ENCODE measurements at regions of chr1 and their contacts with region 1.

Region 1: GRCh38 chr1:23177438-23178380 is 9.1 kb upstream of the LUZP1 start:
- ATAC-seq: peak; percentile 93 to 98 (median 96)
- H3K4me3 ChIP-seq: peak overlapping the region; percentile 28 to 40 (median 36)
- H3K27ac ChIP-seq: peak overlapping the region; percentile 74 to 75
- H3K4me1 ChIP-seq: no peaks in the 10 kb centered on the region

Region 2: DNA sequence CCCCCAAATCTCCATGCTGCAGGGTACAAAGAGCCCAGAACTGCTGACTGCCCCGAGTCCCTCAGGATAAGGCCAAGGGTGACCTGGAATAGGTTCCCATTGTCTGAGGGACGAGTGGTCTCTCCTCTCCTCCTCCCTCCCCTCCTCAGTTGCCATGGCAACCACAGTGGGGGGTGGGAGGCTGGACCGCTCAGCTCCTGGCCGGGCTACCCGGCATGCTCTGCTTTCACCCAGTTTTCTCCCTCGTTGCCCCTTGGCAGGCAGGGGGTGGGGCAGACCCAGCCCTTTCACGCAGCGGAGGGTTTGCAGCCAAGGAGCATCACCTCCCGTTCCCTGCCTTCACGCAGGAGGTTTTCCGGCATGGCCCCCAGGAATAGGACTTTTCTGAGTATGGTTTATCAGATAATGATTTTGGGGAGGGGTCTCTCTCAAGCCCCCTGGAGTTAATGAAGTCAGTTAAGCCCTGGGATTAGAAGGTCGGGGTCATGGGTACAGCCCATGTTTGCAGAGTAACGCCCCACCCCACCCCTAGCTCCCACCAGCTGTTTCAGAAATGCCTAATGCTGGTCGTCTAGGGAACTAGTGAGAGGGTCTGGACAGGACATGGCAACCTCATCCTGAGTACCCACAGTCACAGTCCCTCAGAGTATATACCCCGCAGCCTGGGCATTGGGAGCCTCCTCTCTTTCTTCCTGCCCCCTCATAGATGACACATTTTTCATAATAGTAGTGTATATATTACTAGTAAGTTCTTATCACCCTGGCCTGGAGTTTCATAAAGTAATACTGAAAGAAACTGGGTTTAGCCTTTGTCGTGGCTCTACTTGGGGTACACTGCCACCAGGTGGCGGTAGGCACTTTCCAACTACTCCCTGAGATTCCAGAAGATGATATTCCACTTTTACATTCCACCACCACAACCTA is 504.0 kb before region 1 on chr1:
- in situ Hi-C with region 1: loop called in 4 of 9 experiments (anchors 10 to 25 kb)
- ATAC-seq: peak; percentile 63 to 88 (median 86)
- H3K4me3 ChIP-seq: peak overlapping the region in 1 of 5 donors; percentile 3
- H3K27ac ChIP-seq: peak overlapping the region; percentile 57 to 86
- H3K4me1 ChIP-seq: peaks cover 20 to 29% of the 10 kb centered on the region in 2 donors

Region 3: DNA sequence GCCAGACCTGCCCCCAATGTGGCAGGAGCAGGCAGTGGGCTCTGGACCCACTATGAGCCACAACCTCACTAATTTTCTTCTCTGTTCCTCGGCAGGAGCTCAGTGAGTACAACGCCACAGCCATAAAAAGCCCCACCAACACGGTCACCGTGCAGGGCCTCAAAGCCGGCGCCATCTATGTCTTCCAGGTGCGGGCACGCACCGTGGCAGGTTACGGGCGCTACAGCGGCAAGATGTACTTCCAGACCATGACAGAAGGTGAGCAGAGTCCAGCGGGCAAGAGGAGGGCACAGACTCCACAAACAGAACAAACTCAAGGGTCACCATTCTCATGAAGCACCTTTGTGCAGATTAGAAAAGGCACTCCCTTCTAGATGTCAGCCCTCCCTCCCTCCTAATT is 284.9 kb before region 1 on chr1:
- in situ Hi-C with region 1: no loop called
- ATAC-seq: no peak
- H3K4me3 ChIP-seq: no peak overlapping the region
- H3K27ac ChIP-seq: no peak overlapping the region
- H3K4me1 ChIP-seq: no peaks in the 10 kb centered on the region

Region 4: GRCh38 chr1:22976461-22977243 is 201.1 kb before region 1 on chr1:
- in situ Hi-C with region 1: loop called in 3 of 9 experiments (anchors 10 to 25 kb)
- ATAC-seq: peak; percentile 79 to 96 (median 87)
- H3K4me3 ChIP-seq: no peak overlapping the region
- H3K27ac ChIP-seq: no peak overlapping the region
- H3K4me1 ChIP-seq: peaks cover 5 to 6% of the 10 kb centered on the region in 2 donors

Region 5: GRCh38 chr1:23026573-23026972 is 151.1 kb before region 1 on chr1:
- in situ Hi-C with region 1: no loop called
- ATAC-seq: peak in 2 of 8 experiments; percentile 78 to 89
- H3K4me3 ChIP-seq: no peak overlapping the region
- H3K27ac ChIP-seq: no peak overlapping the region
- H3K4me1 ChIP-seq: peaks cover under 1 to 7% of the 10 kb centered on the region in 2 donors

Region 6: GRCh38 chr1:23098463-23099170 is 79.1 kb before region 1 on chr1:
- in situ Hi-C with region 1: loop called in 4 of 9 experiments (anchors 5 to 25 kb)
- ATAC-seq: peak; percentile 29 to 72 (median 54)
- H3K4me3 ChIP-seq: no peak overlapping the region
- H3K27ac ChIP-seq: no peak overlapping the region
- H3K4me1 ChIP-seq: peaks cover 16 to 18% of the 10 kb centered on the region in 2 donors

Measured in motor neuron (in vitro differentiated cells).